Calu3 (cell line): ENCODE measurements at regions of chr7 and their contacts with region 1.

Region 1: DNA sequence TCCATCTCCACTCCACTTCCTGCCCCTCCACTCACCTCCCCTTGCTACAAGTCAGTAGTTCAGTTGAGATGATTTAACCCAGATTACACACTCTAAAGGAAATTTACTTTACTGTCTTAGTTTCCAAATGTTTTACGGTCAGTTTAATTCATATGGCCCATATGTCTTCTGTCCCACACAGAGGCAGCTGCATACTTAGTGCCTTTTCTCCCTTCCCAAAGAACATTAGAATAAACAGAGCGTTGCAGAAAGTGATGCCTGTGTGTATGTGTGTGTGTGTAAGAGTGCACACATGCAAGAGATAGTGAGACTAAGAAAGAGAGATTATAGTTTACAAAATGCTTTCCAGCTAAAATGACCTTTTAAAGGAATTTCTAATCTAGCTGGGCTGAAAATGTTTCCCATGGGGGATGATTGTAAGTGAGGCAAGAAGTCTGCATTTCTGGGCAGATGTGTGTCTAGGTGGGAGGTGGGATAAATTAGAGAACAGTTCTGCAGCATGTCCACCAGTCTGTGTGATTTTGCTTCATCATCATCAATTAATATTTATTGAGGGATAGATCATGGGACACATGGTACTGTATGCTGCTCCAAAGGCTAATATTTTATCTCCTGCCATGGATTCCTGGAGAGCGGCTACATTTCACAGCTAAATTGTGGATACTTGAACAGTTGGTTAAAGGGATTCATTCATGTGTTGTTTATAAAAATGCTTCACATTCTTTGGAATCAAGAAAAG is 81.5 kb downstream of the NXPH1 start:
- DNase-seq: no peak
- H3K4me3 Mint-ChIP-seq: no peak overlapping the region
- H3K27ac Mint-ChIP-seq: no peak overlapping the region
- H3K4me1 Mint-ChIP-seq: no peaks in the 10 kb centered on the region
- H3K27me3 Mint-ChIP-seq: no peaks in the 10 kb centered on the region
- CTCF ChIP-seq: no peak

Region 2: GRCh38 chr7:7443806-7444350 is 1071.1 kb before region 1 on chr7:
- CTCF ChIA-PET with region 1: no interaction called
- intact Hi-C with region 1: no loop called
- DNase-seq: no peak
- H3K4me3 Mint-ChIP-seq: no peak overlapping the region
- H3K27ac Mint-ChIP-seq: no peak overlapping the region
- H3K4me1 Mint-ChIP-seq: peaks cover 4% of the 10 kb centered on the region
- H3K27me3 Mint-ChIP-seq: no peaks in the 10 kb centered on the region
- CTCF ChIP-seq: no peak

Region 3: GRCh38 chr7:8739837-8740236 is 224.9 kb after region 1 on chr7:
- CTCF ChIA-PET with region 1: interaction called, 10 read pairs
- intact Hi-C with region 1: no loop called
- DNase-seq: no peak
- H3K4me3 Mint-ChIP-seq: no peak overlapping the region
- H3K27ac Mint-ChIP-seq: no peak overlapping the region
- H3K4me1 Mint-ChIP-seq: no peaks in the 10 kb centered on the region
- H3K27me3 Mint-ChIP-seq: peaks cover 15% of the 10 kb centered on the region
- CTCF ChIP-seq: no peak